PC-3 (cell line): ENCODE measurements at regions of chr13 and their contacts with region 1.

Region 1: GRCh38 chr13:61128850-61129645 is 286.6 kb downstream of the PCDH20 start:
- DNase-seq: peak; percentile 73
- ATAC-seq: peak; percentile 92
- H3K4me3 ChIP-seq: peak overlapping the region; percentile 19; the same call in 1 of the 2 replicates
- H3K27ac ChIP-seq: peak overlapping the region; percentile 91
- H3K4me1 ChIP-seq: peaks cover 18% of the 10 kb centered on the region
- H3K27me3 ChIP-seq: no peaks in the 10 kb centered on the region
- CTCF ChIP-seq: no peak

Region 2: GRCh38 chr13:61084988-61085387 is 44.1 kb before region 1 on chr13:
- CTCF ChIA-PET with region 1: no interaction called
- POLR2A ChIA-PET with region 1: no interaction called
- intact Hi-C with region 1: loop called (anchors 1 kb)
- DNase-seq: peak; percentile 71
- ATAC-seq: peak; percentile 80
- H3K4me3 ChIP-seq: no peak overlapping the region
- H3K27ac ChIP-seq: peak overlapping the region; percentile 27
- H3K4me1 ChIP-seq: peaks cover 12% of the 10 kb centered on the region
- H3K27me3 ChIP-seq: no peaks in the 10 kb centered on the region
- CTCF ChIP-seq: no peak

Region 3: GRCh38 chr13:61202042-61202441 is 73.0 kb after region 1 on chr13:
- CTCF ChIA-PET with region 1: no interaction called
- POLR2A ChIA-PET with region 1: no interaction called
- intact Hi-C with region 1: no loop called
- DNase-seq: no peak
- ATAC-seq: no peak
- H3K4me3 ChIP-seq: no peak overlapping the region
- H3K27ac ChIP-seq: no peak overlapping the region
- H3K4me1 ChIP-seq: no peaks in the 10 kb centered on the region
- H3K27me3 ChIP-seq: no peaks in the 10 kb centered on the region
- CTCF ChIP-seq: no peak

Region 4: DNA sequence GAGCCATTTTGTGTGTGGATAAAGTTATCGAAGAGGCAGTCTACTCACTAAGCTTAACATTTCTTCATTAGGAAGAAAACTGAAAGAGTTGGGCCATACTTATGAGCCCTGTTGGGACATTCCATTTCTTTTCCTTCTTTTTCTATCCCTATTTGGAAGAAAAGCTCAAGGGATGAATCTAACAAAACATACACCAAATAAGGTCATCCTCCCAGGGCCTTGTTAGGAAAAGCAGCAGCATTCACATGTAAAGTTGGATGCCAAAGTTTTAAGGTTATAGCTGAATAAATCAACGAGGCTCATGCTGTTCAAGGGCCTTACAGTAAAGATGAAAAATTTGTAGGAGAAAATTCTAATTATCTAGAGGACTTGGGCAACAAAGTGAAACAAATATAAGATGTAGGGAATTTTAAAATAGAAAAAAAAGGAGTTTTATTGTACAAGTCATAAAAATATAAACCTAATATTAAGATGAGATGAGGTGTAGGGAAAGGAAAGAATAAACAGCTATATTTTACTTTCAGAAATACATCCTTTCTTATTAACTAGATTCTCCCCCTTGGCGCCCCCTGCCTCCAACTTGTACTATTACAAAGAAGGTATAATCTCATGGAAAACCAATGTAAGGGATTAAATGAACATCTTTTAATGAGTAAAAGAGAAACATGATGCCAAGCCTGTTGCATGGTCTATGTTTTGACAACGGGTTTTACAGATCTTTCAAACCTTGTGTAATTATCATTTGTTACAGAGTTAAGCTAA is 126.2 kb after region 1 on chr13:
- CTCF ChIA-PET with region 1: no interaction called
- POLR2A ChIA-PET with region 1: no interaction called
- intact Hi-C with region 1: loop called (anchors 10 kb)
- DNase-seq: peak; percentile 40
- ATAC-seq: no peak
- H3K4me3 ChIP-seq: no peak overlapping the region
- H3K27ac ChIP-seq: no peak overlapping the region
- H3K4me1 ChIP-seq: no peaks in the 10 kb centered on the region
- H3K27me3 ChIP-seq: no peaks in the 10 kb centered on the region
- CTCF ChIP-seq: peak; percentile 47